Activated naive CD4-positive, alpha-beta T cell treated with anti-CD3 and anti-CD28 coated beads, Interleukin-2, amount 10 ng/mL, durations not matched to agents 7 days and 5 days (primary cell): ENCODE measurements at regions of chr7 and their contacts with region 1.

Region 1: DNA sequence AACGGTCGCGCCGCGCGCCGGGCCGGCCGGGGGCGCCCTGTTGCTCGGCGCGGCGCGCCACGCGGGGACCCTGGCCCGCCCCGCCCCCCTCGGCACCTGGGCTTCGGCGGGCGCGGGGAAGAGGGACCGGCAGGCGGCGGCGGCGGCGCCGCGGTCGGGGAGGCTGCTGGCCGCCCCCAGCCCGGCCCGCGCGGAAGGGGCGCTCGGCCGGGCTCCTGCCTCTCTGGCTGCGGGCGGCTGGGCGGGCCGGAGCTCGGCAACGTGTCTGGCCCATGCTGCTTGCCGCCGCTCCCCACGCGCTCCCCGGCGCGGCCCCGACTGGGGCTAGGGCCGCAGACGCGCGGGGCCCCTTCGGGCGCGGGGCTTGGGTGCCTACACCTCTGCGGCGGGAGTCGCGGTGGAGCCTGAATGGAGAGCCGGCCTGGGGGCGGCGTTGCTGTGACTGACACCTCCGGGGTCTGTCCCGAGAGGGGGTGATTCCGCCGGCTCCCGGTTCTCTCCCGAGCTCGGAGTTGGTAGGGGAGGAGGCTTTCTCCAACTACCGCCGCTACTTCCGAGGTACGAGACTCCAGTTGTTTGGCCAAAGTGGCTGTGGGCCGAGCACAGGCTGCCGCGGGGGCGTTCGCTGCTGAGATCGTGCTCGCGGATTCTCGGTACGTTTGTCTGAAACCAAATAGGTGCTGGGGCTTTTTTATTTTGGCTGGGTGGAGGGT is 530 bp downstream of the PALS2 start:
- DNase-seq: peak; percentile 53
- H3K4me3 Mint-ChIP-seq: peak overlapping the region; percentile 90
- H3K27ac Mint-ChIP-seq: peak overlapping the region; percentile 77
- H3K4me1 Mint-ChIP-seq: peaks cover 31% of the 10 kb centered on the region
- H3K27me3 Mint-ChIP-seq: peaks cover 33% of the 10 kb centered on the region

Region 2: GRCh38 chr7:24017519-24017918 is 556.3 kb before region 1 on chr7:
- CTCF ChIA-PET with region 1: no interaction called
- DNase-seq: no peak
- H3K4me3 Mint-ChIP-seq: no peak overlapping the region
- H3K27ac Mint-ChIP-seq: no peak overlapping the region
- H3K4me1 Mint-ChIP-seq: no peaks in the 10 kb centered on the region
- H3K27me3 Mint-ChIP-seq: no peaks in the 10 kb centered on the region

Region 3: DNA sequence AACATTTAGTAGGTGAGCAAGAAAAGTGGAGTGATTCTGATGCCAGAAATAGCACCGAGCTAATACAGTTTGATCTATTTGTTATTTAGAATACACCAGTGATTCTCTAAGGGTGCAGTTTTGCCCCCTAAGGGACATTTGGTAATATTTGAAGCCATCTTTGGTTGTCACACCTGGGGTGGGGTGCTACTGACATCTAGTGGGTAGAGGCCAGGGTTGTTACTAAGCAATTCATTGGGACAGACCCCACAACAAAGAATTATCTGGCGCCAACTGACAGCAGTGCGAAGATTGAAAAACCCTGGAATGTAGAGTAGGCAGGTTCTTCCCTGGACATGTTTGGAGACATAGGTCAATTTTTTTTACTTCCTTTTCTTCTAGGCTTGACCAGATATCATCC is 14.1 kb after region 1 on chr7:
- CTCF ChIA-PET with region 1: interaction called, 10 read pairs
- DNase-seq: peak; percentile 66
- H3K4me3 Mint-ChIP-seq: no peak overlapping the region
- H3K27ac Mint-ChIP-seq: no peak overlapping the region
- H3K4me1 Mint-ChIP-seq: peaks cover 8% of the 10 kb centered on the region
- H3K27me3 Mint-ChIP-seq: no peaks in the 10 kb centered on the region

Region 4: GRCh38 chr7:24595671-24596418 is 22.1 kb after region 1 on chr7:
- CTCF ChIA-PET with region 1: interaction called, 10 read pairs
- DNase-seq: no peak
- H3K4me3 Mint-ChIP-seq: no peak overlapping the region
- H3K27ac Mint-ChIP-seq: no peak overlapping the region
- H3K4me1 Mint-ChIP-seq: no peaks in the 10 kb centered on the region
- H3K27me3 Mint-ChIP-seq: no peaks in the 10 kb centered on the region

Region 5: DNA sequence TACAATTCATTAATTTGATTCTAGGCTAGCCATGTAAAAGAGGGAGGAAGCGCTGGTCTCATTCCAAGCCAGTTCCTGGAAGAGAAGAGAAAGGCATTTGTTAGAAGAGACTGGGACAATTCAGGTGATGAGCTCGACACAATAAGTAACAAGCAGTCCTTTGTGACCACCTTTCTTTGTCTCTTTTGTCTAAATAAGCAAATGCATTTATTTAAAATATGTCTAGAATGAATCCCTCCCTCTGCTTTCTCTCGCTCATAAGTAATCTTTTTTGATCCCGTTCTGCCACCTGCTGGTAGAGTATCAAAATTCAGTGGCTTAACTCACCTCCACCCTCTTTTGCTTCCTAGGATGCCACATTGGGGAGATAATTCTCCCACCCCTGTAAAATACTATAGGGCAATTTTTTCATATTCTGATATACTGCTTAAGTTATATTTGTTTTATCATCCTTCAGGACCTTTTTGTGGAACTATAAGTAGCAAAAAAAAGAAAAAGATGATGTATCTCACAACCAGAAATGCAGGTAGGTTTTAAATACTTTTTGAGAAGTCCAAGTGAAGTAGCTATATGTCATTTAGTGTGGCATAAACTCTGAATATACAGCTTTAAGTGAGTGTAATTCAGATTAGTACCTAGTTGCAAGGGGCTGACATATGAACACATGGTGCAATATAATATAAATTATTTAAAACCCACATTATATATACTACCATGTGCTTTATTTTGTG is 91.9 kb after region 1 on chr7:
- CTCF ChIA-PET with region 1: interaction called, 37 read pairs
- DNase-seq: peak; percentile 62
- H3K4me3 Mint-ChIP-seq: no peak overlapping the region
- H3K27ac Mint-ChIP-seq: no peak overlapping the region
- H3K4me1 Mint-ChIP-seq: no peaks in the 10 kb centered on the region
- H3K27me3 Mint-ChIP-seq: no peaks in the 10 kb centered on the region